Psoas muscle (tissue), 8 donors: ENCODE measurements at regions of chr10 and their contacts with region 1.

Region 1: DNA sequence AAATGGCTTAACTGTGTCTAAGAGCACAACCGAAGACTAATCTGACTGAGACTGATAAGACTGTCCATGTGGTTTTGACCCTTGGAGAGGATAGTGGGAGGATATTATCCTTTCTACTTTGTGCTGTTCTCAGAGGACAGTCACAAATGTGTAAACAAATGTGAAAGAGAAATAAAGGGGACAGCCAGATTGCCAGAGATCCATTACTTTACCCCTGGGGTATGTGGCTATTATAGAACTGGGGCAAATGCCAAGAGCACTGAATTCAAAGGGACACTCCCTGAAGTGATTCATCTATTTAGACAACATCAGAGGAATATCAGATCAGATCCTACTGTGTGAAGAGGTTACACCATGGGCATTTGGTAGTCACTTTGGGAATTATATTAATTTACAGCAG is 154.7 kb downstream of the RNLS start:
- DNase-seq: no peak
- ATAC-seq: peak; percentile 27 to 86 (median 62)
- H3K4me3 ChIP-seq: no peak overlapping the region
- H3K27ac ChIP-seq: no peak overlapping the region
- H3K4me1 ChIP-seq: peaks cover 11% of the 10 kb centered on the region
- H3K27me3 ChIP-seq: no peaks in the 10 kb centered on the region
- CTCF ChIP-seq: no peak

Region 2: GRCh38 chr10:88232029-88232895 is 196.2 kb before region 1 on chr10:
- intact Hi-C with region 1: no loop called
- DNase-seq: peak; percentile 79 to 91
- ATAC-seq: peak; percentile 57 to 74 (median 70)
- H3K4me3 ChIP-seq: no peak overlapping the region
- H3K27ac ChIP-seq: peak overlapping the region; percentile 34
- H3K4me1 ChIP-seq: peaks cover 19% of the 10 kb centered on the region
- H3K27me3 ChIP-seq: no peaks in the 10 kb centered on the region
- CTCF ChIP-seq: no peak

Region 3: GRCh38 chr10:88456730-88457129 is 28.3 kb after region 1 on chr10:
- intact Hi-C with region 1: loop called in 1 of 2 experiments (anchors 5 kb)
- DNase-seq: no peak
- ATAC-seq: no peak
- H3K4me3 ChIP-seq: no peak overlapping the region
- H3K27ac ChIP-seq: no peak overlapping the region
- H3K4me1 ChIP-seq: peaks cover 11% of the 10 kb centered on the region
- H3K27me3 ChIP-seq: no peaks in the 10 kb centered on the region
- CTCF ChIP-seq: no peak

Region 4: GRCh38 chr10:88473989-88474883 is 45.8 kb after region 1 on chr10:
- intact Hi-C with region 1: loop called in 1 of 2 experiments (anchors 5 kb)
- DNase-seq: peak in 1 of 2 donors; percentile 62
- ATAC-seq: peak; percentile 41 to 79 (median 68)
- H3K4me3 ChIP-seq: peak overlapping the region; percentile 33
- H3K27ac ChIP-seq: peak overlapping the region; percentile 54
- H3K4me1 ChIP-seq: peaks cover 31% of the 10 kb centered on the region
- H3K27me3 ChIP-seq: no peaks in the 10 kb centered on the region
- CTCF ChIP-seq: no peak

Region 5: GRCh38 chr10:88512599-88512998 is 84.2 kb after region 1 on chr10:
- intact Hi-C with region 1: no loop called
- DNase-seq: no peak
- ATAC-seq: no peak
- H3K4me3 ChIP-seq: no peak overlapping the region
- H3K27ac ChIP-seq: no peak overlapping the region
- H3K4me1 ChIP-seq: no peaks in the 10 kb centered on the region
- H3K27me3 ChIP-seq: no peaks in the 10 kb centered on the region
- CTCF ChIP-seq: no peak

Region 6: GRCh38 chr10:88522715-88523114 is 94.3 kb after region 1 on chr10:
- intact Hi-C with region 1: no loop called
- DNase-seq: no peak
- ATAC-seq: no peak
- H3K4me3 ChIP-seq: no peak overlapping the region
- H3K27ac ChIP-seq: no peak overlapping the region
- H3K4me1 ChIP-seq: no peaks in the 10 kb centered on the region
- H3K27me3 ChIP-seq: no peaks in the 10 kb centered on the region
- CTCF ChIP-seq: no peak

Region 7: GRCh38 chr10:89224739-89225443 is 796.4 kb after region 1 on chr10:
- intact Hi-C with region 1: no loop called
- DNase-seq: no peak
- ATAC-seq: peak in 2 of 4 donors; percentile 38 to 46
- H3K4me3 ChIP-seq: peak overlapping the region; percentile 21
- H3K27ac ChIP-seq: peak overlapping the region; percentile 62
- H3K4me1 ChIP-seq: no peaks in the 10 kb centered on the region
- H3K27me3 ChIP-seq: no peaks in the 10 kb centered on the region
- CTCF ChIP-seq: peak; percentile 20